ENCODE measurements at regions of chr3 and their contacts with region 1.

Region 1: DNA sequence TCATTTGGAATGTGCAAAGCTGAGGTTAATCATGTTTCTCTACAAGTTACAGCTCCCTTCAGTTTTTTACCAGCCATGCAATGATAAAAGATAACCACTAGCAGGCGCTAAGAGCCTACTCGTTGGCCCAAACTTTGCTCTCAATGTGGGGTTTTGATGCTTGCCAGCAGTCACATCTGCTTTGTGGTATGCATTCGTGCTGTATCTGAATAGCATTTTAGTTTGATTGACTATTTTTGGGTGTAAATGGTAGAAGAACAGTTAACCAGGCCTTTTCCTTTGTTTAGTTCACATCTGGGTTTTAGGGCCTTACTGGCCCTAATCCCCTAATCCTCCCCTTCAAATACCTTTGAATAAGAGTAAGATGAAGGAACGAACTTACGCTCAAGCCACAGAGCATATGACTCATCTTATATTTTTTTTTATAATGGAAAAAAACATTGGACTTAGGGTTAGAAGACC is 4.4 kb upstream of the CLDN11 start:
- DNase-seq: peak; percentile 20 to 23
- H3K4me3 ChIP-seq: no peak overlapping the region
- H3K27ac ChIP-seq: no peak overlapping the region
- H3K4me1 ChIP-seq: peaks cover 5 to 7% of the 10 kb centered on the region in 2 donors
- H3K27me3 ChIP-seq: no peaks in the 10 kb centered on the region
- CTCF ChIP-seq: peak; percentile 64 to 95 (median 92)
- POLR2A ChIP-seq: no peak

Region 2: DNA sequence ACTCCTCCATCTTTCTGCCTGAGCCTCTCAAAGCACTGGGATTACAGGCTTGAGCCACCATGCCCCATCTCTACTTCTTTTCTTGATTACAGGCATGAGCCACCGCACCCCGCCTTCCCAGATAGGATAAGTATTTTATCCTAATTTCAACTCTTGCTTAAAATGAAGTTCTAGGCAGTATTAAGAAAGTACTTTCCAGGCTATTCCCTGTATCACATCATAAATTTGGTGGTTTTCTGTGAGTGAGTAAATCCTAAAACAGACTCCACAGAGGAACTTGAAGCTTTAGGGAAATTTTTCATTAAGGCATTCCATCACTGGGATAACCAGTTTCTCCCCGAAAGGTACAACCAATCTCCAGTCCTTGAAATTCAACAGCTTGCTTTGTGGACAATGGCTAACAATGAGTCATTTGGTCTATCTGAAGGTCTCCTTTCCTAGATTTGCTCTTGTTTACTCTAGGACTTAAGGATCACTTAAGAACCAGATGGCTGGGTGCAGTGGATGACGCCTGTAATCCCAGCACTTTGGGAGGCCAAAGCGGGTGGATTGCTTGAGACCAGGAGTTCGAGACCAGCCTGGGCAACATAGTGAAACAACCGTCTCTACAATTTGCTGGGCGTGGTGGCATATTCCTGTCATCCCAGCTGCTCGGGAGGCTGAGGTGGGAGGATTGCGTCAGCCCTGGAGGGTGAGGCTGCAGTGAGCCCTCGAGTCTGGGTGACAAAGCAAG is 106.4 kb before region 1 on chr3:
- intact Hi-C with region 1: loop called (anchors 5 kb)
- DNase-seq: peak in 1 of 2 donors; percentile 20
- H3K4me3 ChIP-seq: no peak overlapping the region
- H3K27ac ChIP-seq: no peak overlapping the region
- H3K4me1 ChIP-seq: no peaks in the 10 kb centered on the region
- H3K27me3 ChIP-seq: no peaks in the 10 kb centered on the region
- CTCF ChIP-seq: no peak
- POLR2A ChIP-seq: no peak

Region 3: GRCh38 chr3:170584585-170585007 is 170.4 kb after region 1 on chr3:
- intact Hi-C with region 1: no loop called
- DNase-seq: peak; percentile 56 to 81
- H3K4me3 ChIP-seq: no peak overlapping the region
- H3K27ac ChIP-seq: no peak overlapping the region
- H3K4me1 ChIP-seq: peaks cover 0 to 14% of the 10 kb centered on the region in 2 donors
- H3K27me3 ChIP-seq: peaks cover 10% of the 10 kb centered on the region
- CTCF ChIP-seq: no peak
- POLR2A ChIP-seq: no peak

Region 4: DNA sequence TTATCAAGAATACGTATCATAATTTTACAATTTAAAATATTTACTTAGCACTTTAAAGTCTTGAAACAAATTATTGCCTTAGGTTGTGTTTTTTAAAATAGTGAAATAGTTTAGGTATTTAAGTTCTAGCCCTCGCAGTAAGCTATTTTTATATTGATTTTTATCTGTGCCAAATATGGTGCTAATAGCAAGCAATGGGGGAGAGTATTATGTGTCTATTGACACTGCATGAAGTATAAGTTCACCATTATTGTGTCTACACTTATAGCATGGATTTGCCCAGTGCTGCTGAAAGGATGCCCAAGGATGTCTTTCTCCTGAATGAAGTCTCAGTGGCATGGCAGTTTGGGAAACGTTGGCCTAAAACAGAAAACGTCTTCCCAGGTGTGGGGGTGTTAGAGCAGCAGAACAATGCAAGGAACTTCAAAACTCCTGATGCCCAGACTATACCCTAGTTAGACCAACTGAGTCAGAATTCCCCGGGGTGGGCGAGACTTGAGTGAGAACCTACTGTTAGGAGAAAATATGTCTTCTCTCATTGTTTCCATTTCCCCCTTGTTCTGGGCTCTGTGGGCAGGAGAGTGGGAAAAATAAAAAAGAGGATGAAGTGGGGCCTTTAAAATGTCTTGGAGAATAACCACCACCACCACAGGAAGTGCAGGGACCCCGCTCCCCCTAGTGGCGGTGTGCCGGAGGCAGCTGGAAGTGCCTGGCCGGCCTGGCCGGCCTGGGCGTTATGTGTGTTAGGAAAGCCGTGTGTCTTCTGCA is 275.8 kb after region 1 on chr3:
- intact Hi-C with region 1: loop called (anchors 5 kb)
- DNase-seq: peak; percentile 73 to 84
- H3K4me3 ChIP-seq: no peak overlapping the region
- H3K27ac ChIP-seq: peak overlapping the region in 2 of 3 donors; percentile 43 to 69
- H3K4me1 ChIP-seq: peaks cover 7 to 15% of the 10 kb centered on the region in 2 donors
- H3K27me3 ChIP-seq: no peaks in the 10 kb centered on the region
- CTCF ChIP-seq: peak in 5 of 6 experiments; percentile 42 to 77 (median 64)
- POLR2A ChIP-seq: no peak

Region 5: DNA sequence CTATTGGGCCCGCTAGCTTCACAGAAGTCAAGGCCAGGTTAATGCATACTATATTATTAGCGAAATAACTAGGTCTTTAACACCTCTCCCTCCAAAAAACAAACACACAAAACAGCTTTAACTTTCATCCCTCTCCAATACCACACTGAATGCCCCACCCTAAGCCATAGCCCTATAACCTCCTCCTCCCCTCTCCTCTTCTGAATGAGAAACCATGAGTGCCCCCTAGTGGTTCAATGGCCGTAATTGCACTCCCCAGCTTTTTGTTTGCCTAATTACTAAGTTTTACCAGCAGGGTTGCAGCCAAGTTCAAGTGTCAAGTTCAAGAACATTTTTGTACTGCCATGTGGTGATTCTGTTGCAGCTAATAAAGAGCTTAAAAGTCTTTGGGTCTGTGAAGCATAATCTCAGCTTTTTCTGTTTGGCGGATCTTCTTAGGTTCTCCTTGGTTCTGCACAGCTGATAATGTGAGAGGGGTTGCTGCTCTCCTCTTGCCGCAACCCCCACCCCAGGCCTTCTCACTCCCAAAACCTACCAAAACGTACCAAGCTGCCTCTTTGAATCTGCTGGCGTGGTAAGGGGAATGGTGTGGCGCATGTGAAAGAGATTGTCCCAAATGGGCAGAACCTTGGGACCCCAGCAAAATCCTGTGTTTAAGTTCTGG is 397.8 kb after region 1 on chr3:
- intact Hi-C with region 1: loop called (anchors 5 kb)
- DNase-seq: peak; percentile 64 to 68
- H3K4me3 ChIP-seq: no peak overlapping the region
- H3K27ac ChIP-seq: no peak overlapping the region
- H3K4me1 ChIP-seq: peaks cover 3 to 4% of the 10 kb centered on the region in 2 donors
- H3K27me3 ChIP-seq: no peaks in the 10 kb centered on the region
- CTCF ChIP-seq: peak; percentile 88 to 99 (median 94)
- POLR2A ChIP-seq: no peak